Endothelial cell of umbilical vein (primary cell): ENCODE measurements at regions of chr13 and their contacts with region 1.

Region 1: GRCh38 chr13:100987953-100988352 is 313.4 kb upstream of the TMTC4 start:
- DNase-seq: peak; percentile 9
- H3K4me3 ChIP-seq: no peak overlapping the region
- H3K27ac ChIP-seq: no peak overlapping the region
- H3K4me1 ChIP-seq: no peaks in the 10 kb centered on the region
- H3K27me3 ChIP-seq: no peaks in the 10 kb centered on the region
- CTCF ChIP-seq: no peak
- POLR2A ChIP-seq: no peak

Region 2: GRCh38 chr13:100738176-100738855 is 249.6 kb before region 1 on chr13:
- CTCF ChIA-PET with region 1: no interaction called
- POLR2A ChIA-PET with region 1: no interaction called
- dilution Hi-C with region 1: no loop called
- intact Hi-C with region 1: no loop called
- DNase-seq: no peak
- H3K4me3 ChIP-seq: no peak overlapping the region
- H3K27ac ChIP-seq: no peak overlapping the region
- H3K4me1 ChIP-seq: no peaks in the 10 kb centered on the region
- H3K27me3 ChIP-seq: no peaks in the 10 kb centered on the region
- CTCF ChIP-seq: no peak
- POLR2A ChIP-seq: no peak

Region 3: GRCh38 chr13:100808330-100809266 is 179.4 kb before region 1 on chr13:
- CTCF ChIA-PET with region 1: no interaction called
- POLR2A ChIA-PET with region 1: no interaction called
- dilution Hi-C with region 1: no loop called
- intact Hi-C with region 1: no loop called
- DNase-seq: no peak
- H3K4me3 ChIP-seq: no peak overlapping the region
- H3K27ac ChIP-seq: no peak overlapping the region
- H3K4me1 ChIP-seq: no peaks in the 10 kb centered on the region
- H3K27me3 ChIP-seq: no peaks in the 10 kb centered on the region
- CTCF ChIP-seq: no peak
- POLR2A ChIP-seq: no peak

Region 4: GRCh38 chr13:100848304-100848703 is 139.6 kb before region 1 on chr13:
- CTCF ChIA-PET with region 1: no interaction called
- POLR2A ChIA-PET with region 1: no interaction called
- dilution Hi-C with region 1: no loop called
- intact Hi-C with region 1: loop called (anchors 10 kb)
- DNase-seq: no peak
- H3K4me3 ChIP-seq: no peak overlapping the region
- H3K27ac ChIP-seq: no peak overlapping the region
- H3K4me1 ChIP-seq: no peaks in the 10 kb centered on the region
- H3K27me3 ChIP-seq: no peaks in the 10 kb centered on the region
- CTCF ChIP-seq: no peak
- POLR2A ChIP-seq: no peak